MCF 10A (cell line): ENCODE measurements at regions of chr13 and their contacts with region 1.

Region 1: DNA sequence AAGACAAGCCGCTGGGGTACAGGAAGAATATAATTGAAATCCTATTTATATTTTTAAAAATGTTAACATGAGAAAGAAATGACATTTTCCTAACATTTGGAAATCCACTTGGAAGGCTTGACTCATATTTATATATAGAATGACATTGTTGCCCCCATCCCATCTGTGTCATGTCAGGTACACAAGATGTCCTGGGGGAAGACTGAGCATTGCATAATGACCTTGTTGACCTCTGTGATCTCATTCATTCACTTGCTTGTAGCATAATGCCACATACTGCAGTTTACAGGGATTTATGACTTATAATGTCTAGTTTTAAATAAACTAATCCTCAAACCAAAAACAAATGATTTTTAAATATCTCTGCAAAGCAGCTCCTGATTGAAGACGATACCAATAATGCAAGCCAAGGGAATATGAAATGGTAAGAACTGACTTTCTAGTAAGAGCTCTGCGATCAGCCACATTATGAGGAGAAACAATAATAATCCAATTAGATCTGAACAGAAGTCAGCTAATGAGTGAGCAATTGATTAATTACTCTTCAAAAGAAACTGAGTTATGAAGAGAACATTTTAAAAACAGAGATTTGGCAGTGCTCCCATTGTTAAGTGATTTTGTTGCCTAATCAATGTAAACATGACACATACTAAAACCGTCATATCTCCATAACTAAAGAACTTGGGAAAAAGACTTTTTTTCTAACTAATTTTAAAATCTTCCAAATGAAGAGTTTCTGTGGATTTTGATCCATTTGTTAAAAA is 21.2 kb upstream of the VWA8 start:
- DNase-seq: peak; percentile 78
- H3K4me3 Mint-ChIP-seq: no peak overlapping the region
- H3K27ac Mint-ChIP-seq: no peak overlapping the region
- H3K4me1 Mint-ChIP-seq: peaks cover 18% of the 10 kb centered on the region
- H3K27me3 Mint-ChIP-seq: peaks cover 16% of the 10 kb centered on the region
- CTCF ChIP-seq: no peak

Region 2: GRCh38 chr13:42028113-42028799 is 46.1 kb after region 1 on chr13:
- CTCF ChIA-PET with region 1: interaction called, 3 read pairs
- POLR2A ChIA-PET with region 1: interaction called, 4 read pairs
- intact Hi-C with region 1: loop called (anchors 5 kb)
- DNase-seq: no peak
- H3K4me3 Mint-ChIP-seq: no peak overlapping the region
- H3K27ac Mint-ChIP-seq: no peak overlapping the region
- H3K4me1 Mint-ChIP-seq: peaks cover 29% of the 10 kb centered on the region
- H3K27me3 Mint-ChIP-seq: no peaks in the 10 kb centered on the region
- CTCF ChIP-seq: no peak